ENCODE measurements at regions of chr7 and their contacts with region 1.

Region 1: DNA sequence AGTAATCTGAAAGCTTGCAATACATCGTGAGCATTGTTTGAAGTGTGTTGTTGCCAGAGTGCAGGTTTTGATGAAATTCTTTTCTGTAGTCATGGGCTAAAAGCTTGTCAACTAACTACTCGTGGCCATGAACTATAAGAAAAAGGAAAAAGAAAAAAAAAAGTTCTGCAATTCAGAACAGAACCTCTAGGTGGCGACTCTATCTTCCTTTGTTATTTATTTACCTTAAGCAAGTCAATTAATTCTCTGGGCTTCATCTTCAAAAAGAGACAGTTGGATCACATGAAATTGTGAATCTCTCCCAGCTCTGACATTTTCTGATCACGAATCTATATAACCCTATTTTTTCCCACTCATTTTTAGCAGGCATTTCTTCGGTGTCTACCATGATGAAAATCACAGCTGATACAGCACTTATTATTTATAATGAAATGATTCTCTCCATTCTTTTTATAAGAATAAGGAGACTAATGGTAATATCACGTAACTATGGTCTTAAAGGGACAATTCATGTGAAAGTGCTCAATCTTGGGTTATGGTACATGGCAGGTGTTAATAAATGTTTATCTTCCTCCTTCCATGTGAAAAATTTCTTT is 18.8 kb downstream of the TMEM196 start:
- DNase-seq: no peak
- H3K4me3 ChIP-seq: no peak overlapping the region
- H3K27ac ChIP-seq: no peak overlapping the region
- H3K4me1 ChIP-seq: peaks cover 0 to 6% (median 0%) of the 10 kb centered on the region in 3 donors
- H3K27me3 ChIP-seq: no peaks in the 10 kb centered on the region
- CTCF ChIP-seq: peak; percentile 45 to 75 (median 59)
- POLR2A ChIP-seq: no peak

Region 2: GRCh38 chr7:19899529-19899928 is 144.9 kb after region 1 on chr7:
- intact Hi-C with region 1: no loop called
- DNase-seq: no peak
- H3K4me3 ChIP-seq: no peak overlapping the region
- H3K27ac ChIP-seq: no peak overlapping the region
- H3K4me1 ChIP-seq: peaks cover 0 to 4% (median 0%) of the 10 kb centered on the region in 3 donors
- H3K27me3 ChIP-seq: no peaks in the 10 kb centered on the region
- CTCF ChIP-seq: no peak
- POLR2A ChIP-seq: no peak

Region 3: GRCh38 chr7:20310963-20311742 is 556.5 kb after region 1 on chr7:
- intact Hi-C with region 1: loop called (anchors 10 kb)
- DNase-seq: no peak
- H3K4me3 ChIP-seq: no peak overlapping the region
- H3K27ac ChIP-seq: no peak overlapping the region
- H3K4me1 ChIP-seq: peaks cover 0 to 10% (median 0%) of the 10 kb centered on the region in 3 donors
- H3K27me3 ChIP-seq: no peaks in the 10 kb centered on the region
- CTCF ChIP-seq: peak; percentile 15 to 62 (median 40)
- POLR2A ChIP-seq: no peak

Region 4: GRCh38 chr7:20598459-20599309 is 844.1 kb after region 1 on chr7:
- intact Hi-C with region 1: loop called (anchors 10 kb)
- DNase-seq: no peak
- H3K4me3 ChIP-seq: no peak overlapping the region
- H3K27ac ChIP-seq: no peak overlapping the region
- H3K4me1 ChIP-seq: no peaks in the 10 kb centered on the region
- H3K27me3 ChIP-seq: no peaks in the 10 kb centered on the region
- CTCF ChIP-seq: peak; percentile 68 to 81 (median 75)
- POLR2A ChIP-seq: no peak

Measured in esophagus squamous epithelium (tissue), 5 donors.